ENCODE measurements at regions of chr20 and their contacts with region 1.

Region 1: DNA sequence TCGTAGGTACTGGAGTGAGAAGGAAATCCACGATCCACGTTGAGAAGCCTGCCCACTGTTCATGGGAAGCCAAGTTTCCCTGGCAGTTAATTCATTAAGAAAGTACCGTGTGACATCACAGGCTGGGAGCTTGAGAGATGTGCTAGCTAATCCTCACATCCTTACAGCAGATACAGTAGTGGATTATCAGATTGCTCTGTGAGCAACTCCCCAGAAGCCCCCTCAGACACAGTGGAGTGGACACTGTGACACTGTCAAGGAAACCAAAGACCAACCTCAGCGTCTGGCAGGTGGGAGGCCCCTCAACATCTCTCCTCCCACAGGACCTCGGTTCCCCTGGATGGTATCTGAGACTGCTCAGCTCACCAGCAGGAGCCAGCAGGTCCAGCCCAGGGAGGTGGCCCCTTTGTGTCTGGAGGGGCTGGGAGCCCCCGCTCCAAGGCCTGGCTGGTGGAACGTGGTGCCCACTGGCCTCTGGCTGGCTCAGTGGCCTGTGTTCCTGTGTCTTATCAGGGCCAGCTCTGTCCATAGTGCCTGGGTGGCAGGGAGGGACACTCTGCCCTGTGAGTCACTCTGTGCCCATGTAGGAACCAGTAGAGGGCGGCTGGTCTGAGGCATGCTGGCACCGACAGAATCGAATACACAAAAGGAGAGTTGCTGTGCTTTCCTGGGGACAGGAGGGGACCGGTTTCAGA is 7.2 kb downstream of the PYGB start:
- ATAC-seq: peak in 6 of 8 experiments; percentile 36 to 95 (median 80)
- H3K4me3 ChIP-seq: no peak overlapping the region
- H3K27ac ChIP-seq: no peak overlapping the region
- H3K4me1 ChIP-seq: peaks cover 20 to 23% of the 10 kb centered on the region in 2 donors

Region 2: GRCh38 chr20:24406750-24407510 is 848.2 kb before region 1 on chr20:
- in situ Hi-C with region 1: no loop called
- ATAC-seq: peak in 4 of 8 experiments; percentile 23 to 81 (median 68)
- H3K4me3 ChIP-seq: no peak overlapping the region
- H3K27ac ChIP-seq: no peak overlapping the region
- H3K4me1 ChIP-seq: peaks cover 0 to 3% of the 10 kb centered on the region in 2 donors

Region 3: DNA sequence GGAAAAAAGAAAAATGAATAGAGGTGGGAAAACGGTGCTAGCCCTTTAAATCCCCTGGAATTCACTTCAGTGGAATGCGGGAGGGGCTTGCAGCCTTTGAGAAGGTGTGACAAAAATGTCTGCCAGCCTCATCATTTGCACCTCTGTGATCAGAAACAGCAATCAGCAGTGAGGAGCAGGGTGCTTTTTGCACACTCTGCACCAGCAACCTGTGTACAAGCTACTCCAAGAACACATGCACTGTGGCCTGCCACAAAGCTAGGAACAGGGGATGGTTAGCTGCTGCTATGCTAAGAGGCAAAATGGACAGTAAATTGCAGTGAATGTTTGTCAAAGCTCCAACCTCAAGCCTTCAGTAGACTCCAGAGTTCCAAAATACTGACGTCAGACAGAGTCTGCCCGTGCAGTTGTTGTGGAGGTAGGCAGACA is 182.0 kb after region 1 on chr20:
- in situ Hi-C with region 1: loop called in 1 of 9 experiments (anchors 25 kb)
- ATAC-seq: no peak
- H3K4me3 ChIP-seq: no peak overlapping the region
- H3K27ac ChIP-seq: no peak overlapping the region
- H3K4me1 ChIP-seq: no peaks in the 10 kb centered on the region

Region 4: DNA sequence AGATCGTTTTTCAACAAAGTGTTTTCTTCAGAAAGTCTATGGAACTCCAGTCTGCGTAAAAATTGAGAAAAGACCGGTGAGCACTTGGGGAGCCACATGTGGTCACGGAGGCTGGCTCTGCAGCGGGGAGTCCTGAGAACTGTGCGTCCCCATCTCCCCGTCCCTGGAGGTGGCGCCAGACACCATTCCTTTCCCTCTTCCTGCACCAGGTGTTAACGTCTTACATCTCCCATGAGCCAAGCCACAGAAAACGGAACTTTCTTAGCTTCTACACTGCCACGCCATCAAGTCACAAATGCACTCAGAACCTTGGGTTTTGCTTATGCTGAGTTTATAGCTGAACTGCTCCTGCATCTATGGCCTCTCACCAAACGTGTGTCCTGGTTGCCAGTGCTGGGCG is 214.9 kb after region 1 on chr20:
- in situ Hi-C with region 1: no loop called
- ATAC-seq: peak in 4 of 8 experiments; percentile 42 to 61 (median 52)
- H3K4me3 ChIP-seq: no peak overlapping the region
- H3K27ac ChIP-seq: no peak overlapping the region
- H3K4me1 ChIP-seq: no peaks in the 10 kb centered on the region

Measured in motor neuron (in vitro differentiated cells).